ENCODE measurements at regions of chr2 and their contacts with region 1.

Region 1: DNA sequence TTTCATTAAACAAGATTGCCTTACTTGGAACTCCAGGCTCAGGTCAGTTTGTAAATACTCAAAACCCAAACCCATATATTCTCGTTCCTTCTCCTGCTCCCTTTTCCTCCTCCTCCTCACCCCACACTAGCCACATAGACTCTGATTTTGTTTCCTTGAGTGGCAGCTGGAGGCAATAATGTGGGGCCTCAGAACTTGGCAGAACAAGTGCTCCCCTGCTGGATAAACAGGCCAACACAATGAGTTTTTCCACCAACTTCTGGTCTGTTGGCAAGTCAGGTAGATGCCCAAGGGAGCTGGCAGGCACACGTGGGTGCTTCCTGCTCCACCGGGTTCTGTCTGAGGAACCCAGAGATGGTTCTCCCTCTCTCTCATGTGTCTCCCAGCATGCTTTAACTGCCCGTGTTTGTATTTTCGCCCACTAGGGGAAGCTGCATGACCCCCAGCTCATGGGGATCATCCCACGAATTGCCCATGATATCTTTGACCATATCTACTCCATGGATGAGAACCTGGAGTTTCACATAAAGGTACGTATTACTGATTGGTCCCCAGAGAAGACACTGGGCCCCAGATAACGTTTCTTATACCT is 61.9 kb downstream of the KIF5C start:
- DNase-seq: no peak

Region 2: DNA sequence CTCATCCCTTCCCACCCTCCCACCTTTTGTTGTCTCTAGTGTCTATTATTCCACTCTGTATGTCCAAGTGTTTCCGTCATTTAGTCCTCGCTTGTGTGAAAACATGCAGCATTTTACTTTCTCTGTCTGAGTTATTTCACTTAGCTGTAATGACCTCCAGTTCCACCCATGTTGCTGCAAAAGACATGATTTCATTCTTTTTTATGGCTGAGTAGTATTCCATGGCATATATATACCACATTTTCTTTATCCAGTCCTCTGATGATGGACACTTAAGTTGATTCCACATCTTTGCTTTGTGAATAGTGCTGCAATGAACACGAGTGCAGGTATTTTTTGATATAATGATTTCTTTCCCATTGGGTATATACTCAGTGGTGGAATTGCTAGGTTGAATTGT is 619.4 kb before region 1 on chr2:
- intact Hi-C with region 1: no loop called
- DNase-seq: no peak

Region 3: DNA sequence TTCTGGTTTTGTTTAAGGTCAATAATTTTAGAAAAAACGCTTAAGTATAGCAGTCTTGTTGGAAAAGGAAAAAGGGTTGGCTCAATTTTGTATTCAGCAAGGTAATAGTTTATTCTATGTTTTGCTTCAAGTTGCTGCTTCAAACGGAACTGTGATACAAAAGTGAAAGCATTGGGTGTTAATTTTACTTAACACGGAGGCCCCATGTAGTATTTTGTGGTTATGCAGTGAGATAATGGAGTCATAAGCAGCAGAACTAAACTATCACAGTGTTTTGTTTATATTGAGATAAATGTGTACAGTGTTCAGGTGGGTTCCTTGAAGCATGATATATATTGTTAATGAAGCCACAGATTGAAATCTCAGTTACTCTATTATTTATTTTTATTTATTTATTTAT is 34.6 kb after region 1 on chr2:
- intact Hi-C with region 1: loop called (anchors 5 kb)
- DNase-seq: no peak